Esophagus squamous epithelium (tissue), 5 donors: ENCODE measurements at regions of chr3 and their contacts with region 1.

Region 1: DNA sequence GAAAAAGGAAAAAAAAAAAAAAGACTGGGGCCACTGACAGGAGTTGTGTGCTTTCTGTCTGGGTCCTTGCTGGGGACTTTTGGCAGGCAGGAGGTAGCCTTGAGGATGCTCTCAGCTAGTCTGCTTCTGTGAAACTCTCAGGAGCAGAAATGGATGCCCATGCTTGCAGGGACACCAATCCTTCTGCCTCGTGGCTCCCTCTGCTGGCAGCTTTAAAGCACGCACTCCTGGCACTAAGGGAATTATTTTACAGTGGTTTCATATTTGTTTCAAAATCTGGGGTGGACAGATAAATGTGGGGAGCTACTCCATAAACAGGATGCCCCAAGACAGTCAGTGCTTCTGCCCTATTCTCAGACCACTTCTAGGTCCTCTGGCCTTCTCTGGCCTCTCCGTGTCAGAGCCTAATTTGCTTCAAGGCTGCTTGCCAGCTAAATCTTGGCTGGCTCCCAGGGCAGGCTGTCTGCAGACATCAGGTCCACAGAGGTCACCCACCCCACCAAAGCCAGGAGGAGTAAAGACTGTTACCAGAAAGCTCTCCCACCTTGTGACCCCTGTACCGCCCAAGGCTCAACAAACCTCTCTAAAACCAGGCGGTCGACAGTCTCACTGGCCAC is 17.1 kb downstream of the TRAIP start:
- DNase-seq: peak; percentile 12
- H3K4me3 ChIP-seq: no peak overlapping the region
- H3K27ac ChIP-seq: peak overlapping the region in 1 of 4 donors; percentile 14
- H3K4me1 ChIP-seq: peaks cover 0 to 24% (median 7%) of the 10 kb centered on the region in 3 donors
- H3K27me3 ChIP-seq: no peaks in the 10 kb centered on the region
- CTCF ChIP-seq: peak; percentile 87 to 95 (median 93)
- POLR2A ChIP-seq: no peak

Region 2: DNA sequence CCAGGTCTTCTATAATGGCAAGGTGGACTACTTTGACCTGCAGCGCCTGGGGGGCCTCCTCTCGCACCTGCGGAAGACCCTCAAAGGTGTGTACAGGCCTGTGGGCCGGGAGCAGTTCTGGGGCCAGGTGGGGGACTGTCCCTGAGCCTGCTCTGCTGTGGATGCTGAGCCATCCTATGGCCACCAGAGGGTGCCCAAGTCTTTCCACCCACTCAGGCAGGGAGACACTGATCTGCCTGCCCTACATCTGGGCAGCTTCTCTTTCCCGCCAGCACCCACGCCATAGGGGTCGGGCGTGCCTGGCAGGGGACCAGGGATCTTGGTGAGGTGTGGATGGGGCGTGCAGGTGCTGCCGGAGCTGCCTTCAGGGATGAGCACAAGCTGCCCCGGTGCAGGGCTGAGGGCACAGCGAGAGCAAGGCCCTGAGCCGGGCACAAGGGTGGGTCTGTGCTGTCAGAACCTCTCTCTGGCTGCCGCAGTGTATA is 135.8 kb before region 1 on chr3:
- intact Hi-C with region 1: loop called (anchors 10 kb)
- DNase-seq: no peak
- H3K4me3 ChIP-seq: no peak overlapping the region
- H3K27ac ChIP-seq: no peak overlapping the region
- H3K4me1 ChIP-seq: peaks cover 0 to 5% (median 0%) of the 10 kb centered on the region in 3 donors
- H3K27me3 ChIP-seq: no peaks in the 10 kb centered on the region
- CTCF ChIP-seq: peak; percentile 70 to 91 (median 78)
- POLR2A ChIP-seq: no peak

Region 3: DNA sequence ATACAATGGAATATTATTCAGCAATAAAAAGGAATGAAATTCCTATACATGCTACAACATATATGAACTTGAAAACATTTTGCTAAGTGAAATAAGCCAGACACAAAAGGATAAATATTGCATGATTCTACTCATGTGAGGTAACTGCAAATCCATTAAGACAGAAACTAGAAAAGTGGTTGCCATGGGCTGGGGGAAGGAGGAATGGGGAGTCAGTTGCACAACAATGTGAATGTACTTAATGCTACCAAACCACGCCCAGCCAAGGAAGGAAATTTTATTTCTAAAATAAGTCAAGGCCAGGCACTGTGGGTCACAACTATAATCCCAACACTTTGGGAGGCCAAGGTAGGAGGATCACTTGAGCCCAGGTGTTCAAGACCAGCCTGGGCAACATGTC is 105.8 kb before region 1 on chr3:
- intact Hi-C with region 1: no loop called
- DNase-seq: no peak
- H3K4me3 ChIP-seq: no peak overlapping the region
- H3K27ac ChIP-seq: no peak overlapping the region
- H3K4me1 ChIP-seq: no peaks in the 10 kb centered on the region
- H3K27me3 ChIP-seq: no peaks in the 10 kb centered on the region
- CTCF ChIP-seq: no peak
- POLR2A ChIP-seq: no peak

Region 4: DNA sequence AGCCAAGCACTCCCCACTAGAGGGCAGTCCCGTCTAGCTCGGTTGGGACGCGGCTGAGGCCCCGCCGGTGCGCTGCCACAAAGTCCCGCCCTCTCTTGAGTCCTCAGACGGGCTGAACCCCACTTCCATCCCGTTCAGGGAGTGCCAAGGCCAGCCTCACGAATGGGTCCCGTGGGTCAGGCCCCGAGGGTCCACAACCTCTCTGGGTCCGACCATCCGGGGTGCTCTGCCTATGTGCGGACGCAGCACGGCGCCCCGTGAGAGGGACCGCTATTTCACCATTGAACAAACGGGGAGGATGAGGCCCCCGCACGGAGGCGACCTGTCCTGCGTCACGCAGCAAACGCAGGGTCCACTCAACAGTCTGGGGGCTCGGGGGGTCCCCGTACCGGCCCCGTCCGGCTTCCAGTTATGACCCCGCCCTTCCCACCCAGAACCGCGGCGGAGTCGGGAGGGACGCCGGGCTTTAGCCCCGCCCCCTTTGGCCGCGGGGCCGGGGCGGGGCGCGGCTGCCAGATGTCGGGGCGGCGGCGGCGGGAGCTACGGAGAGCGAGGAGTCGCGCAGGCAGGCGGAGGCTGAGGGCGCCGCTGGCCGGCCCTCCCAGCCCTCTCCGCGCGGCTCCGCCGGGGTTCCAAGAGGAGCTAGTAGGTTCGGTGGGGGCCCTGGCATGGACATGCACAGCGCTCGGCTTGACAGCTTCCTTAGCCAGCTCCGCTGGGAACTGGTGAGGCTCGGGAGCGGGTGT is 36.4 kb before region 1 on chr3 and contains the start of gene INKA1:
- intact Hi-C with region 1: loop called (anchors 2 kb)
- DNase-seq: peak; percentile 69
- H3K4me3 ChIP-seq: peak within 1 kb of the TSS; percentile 87 to 93 (median 90)
- H3K27ac ChIP-seq: peak within 1 kb of the TSS; percentile 96 to 98 (median 97)
- H3K4me1 ChIP-seq: peaks cover 49 to 67% (median 52%) of the 10 kb centered on the region in 3 donors
- H3K27me3 ChIP-seq: peaks cover 0 to 2% (median 0%) of the 10 kb centered on the region in 4 donors
- CTCF ChIP-seq: peak; percentile 89 to 95 (median 92)
- POLR2A ChIP-seq: peak in 2 of 4 donors; percentile 80 to 81
- total RNA-seq, gene INKA1: 15.2 to 23.3 (median 19.9) TPM

Region 5: GRCh38 chr3:49955636-49956035 is 116.3 kb after region 1 on chr3:
- intact Hi-C with region 1: no loop called
- DNase-seq: no peak
- H3K4me3 ChIP-seq: no peak overlapping the region
- H3K27ac ChIP-seq: no peak overlapping the region
- H3K4me1 ChIP-seq: peaks cover 0 to 9% (median 2%) of the 10 kb centered on the region in 3 donors
- H3K27me3 ChIP-seq: no peaks in the 10 kb centered on the region
- CTCF ChIP-seq: no peak
- POLR2A ChIP-seq: no peak